Sciatic nerve (tissue), 2 donors: ENCODE measurements at regions of chr2 and their contacts with region 1.

Region 1: GRCh38 chr2:165582409-165582808 is 112.9 kb downstream of the CSRNP3 start:
- DNase-seq: no peak
- ATAC-seq: peak; percentile 62

Region 2: DNA sequence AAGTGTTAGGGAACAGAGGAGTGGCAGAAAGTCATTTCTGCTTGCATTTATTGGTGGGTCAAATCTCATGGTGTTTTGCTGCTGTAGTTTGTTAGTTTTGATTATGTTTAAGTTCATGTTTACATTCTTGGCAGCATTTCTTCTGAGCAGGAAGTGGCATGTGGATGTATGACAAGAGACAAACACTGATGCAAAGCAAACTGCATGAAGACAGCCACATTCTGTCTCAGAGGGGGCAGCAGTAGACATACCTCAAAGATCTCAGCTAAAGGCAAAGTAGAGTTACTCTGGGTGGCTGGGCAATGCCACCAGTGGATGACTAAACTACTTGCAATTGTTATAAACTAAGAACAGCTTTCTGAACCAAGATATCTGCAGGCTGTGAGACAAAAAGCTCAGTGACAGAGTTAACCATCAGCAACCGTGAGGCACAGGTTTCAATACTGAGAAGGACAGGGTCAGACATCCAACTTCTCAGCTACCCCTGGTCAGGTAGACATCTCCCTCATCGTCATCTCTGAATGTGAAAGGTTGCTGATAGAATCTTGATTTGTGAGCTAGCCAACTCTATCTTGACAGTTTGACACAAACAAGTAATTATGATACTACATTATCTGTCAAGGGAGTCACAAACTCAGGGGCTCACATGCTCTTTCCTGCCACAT is 195.2 kb after region 1 on chr2:
- intact Hi-C with region 1: loop called (anchors 2 kb)
- DNase-seq: no peak
- ATAC-seq: no peak